IMR-90 (cell line): ENCODE measurements at regions of chr4 and their contacts with region 1.

Region 1: GRCh38 chr4:186760576-186760975 is 36.9 kb upstream of the FAT1 start:
- DNase-seq: peak; percentile 95
- ATAC-seq: peak; percentile 75
- H3K4me3 ChIP-seq: no peak overlapping the region
- H3K27ac ChIP-seq: no peak overlapping the region
- H3K4me1 ChIP-seq: peaks cover 5% of the 10 kb centered on the region
- H3K27me3 ChIP-seq: no peaks in the 10 kb centered on the region
- CTCF ChIP-seq: no peak
- POLR2A ChIP-seq: no peak
- RAD21 ChIP-seq: no peak

Region 2: DNA sequence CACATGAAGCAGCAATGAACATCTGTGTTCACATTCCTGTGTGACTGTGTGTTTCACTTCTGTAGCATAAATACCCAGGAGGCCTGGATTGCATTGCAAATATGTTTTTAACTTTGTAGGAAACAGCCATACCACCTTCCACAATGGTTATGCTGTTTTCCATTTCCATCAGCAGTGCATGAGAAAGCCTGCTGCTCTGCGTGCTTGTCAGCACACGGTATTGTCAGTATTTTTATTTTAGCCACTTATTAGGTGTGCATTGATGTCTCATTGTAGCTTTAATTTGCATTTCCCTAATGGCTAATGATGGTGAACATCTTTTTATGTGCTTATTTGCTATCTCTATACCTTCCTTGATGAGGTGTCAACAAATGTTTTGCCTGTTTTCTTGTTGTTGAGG is 1734.6 kb after region 1 on chr4:
- CTCF ChIA-PET with region 1: no interaction called
- POLR2A ChIA-PET with region 1: no interaction called
- dilution Hi-C with region 1: no loop called
- in situ Hi-C with region 1: no loop called
- intact Hi-C with region 1: loop called (anchors 5 kb)
- DNase-seq: no peak
- ATAC-seq: no peak
- H3K4me3 ChIP-seq: no peak overlapping the region
- H3K27ac ChIP-seq: no peak overlapping the region
- H3K4me1 ChIP-seq: no peaks in the 10 kb centered on the region
- H3K27me3 ChIP-seq: no peaks in the 10 kb centered on the region
- CTCF ChIP-seq: no peak
- POLR2A ChIP-seq: no peak
- RAD21 ChIP-seq: no peak